Left cardiac atrium (tissue), 4 donors: ENCODE measurements at regions of chr12 and their contacts with region 1.

Region 1: DNA sequence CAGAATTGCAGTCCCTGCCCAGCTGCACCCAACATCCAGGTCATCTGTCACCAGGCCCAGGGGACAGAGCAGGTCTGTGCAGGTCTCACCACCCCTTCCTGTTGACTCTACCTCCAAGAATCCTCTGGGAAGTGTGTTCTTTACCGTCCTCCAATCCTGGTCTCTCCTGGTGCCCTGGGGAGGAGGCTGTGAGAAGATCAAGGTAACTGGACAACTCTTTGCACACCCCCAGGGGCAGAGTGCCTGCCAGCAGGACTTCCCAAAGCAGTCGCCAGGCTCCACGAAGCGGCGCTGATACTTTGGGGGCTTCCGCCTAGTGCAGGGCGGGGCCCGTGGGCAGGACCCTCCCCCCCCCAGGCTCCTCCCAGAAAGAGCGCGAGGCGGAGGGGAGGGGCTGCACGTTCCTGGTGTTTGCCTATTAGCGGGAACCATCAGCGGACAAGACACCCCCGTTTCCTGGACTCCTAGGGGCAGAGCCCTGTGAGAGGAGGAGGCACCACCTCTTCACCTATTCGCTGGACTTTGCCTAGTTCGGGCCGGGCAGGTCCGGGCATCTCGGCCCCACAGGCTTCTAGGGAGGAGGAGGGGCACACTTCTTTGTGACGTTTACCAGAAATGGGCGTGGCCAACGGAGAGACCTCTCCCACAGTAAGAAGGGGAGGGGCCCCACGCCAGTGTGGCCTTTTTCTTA is 918.0 kb downstream of the AACS start:
- DNase-seq: peak; percentile 61
- ATAC-seq: peak; percentile 83 to 95

Region 2: GRCh38 chr12:125766091-125766490 is 217.1 kb before region 1 on chr12:
- intact Hi-C with region 1: loop called in 1 of 2 experiments (anchors 10 kb)
- DNase-seq: no peak
- ATAC-seq: no peak

Region 3: DNA sequence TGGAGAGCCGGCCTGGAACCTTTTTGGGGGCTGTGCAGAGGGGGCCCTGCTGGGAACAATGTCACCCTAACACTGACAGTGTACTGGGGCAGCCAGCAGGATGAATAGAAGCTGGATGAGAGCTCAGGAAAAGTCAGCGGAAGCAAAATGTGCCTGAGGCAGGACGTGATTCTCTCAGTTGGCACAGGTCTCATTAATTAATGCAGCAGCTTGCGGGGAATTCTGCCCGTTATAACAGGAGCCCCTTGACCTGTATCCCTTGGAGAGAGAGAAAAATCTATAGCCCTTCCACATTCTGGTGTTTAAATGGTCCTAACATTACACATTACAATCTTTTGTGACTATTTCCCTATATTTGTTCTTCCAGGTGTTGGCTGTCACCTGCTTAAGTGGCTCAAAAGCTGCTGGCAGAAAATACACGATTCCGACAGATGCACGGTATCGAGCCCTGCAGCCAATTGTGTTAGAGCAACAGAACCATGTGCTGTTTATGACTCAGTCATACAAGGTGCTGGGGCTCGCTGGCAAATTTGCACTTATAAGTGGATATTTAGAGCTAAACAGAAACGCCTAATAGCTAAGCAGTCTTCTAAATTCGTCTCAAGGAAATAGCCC is 63.3 kb before region 1 on chr12:
- intact Hi-C with region 1: no loop called
- DNase-seq: no peak
- ATAC-seq: no peak

Region 4: DNA sequence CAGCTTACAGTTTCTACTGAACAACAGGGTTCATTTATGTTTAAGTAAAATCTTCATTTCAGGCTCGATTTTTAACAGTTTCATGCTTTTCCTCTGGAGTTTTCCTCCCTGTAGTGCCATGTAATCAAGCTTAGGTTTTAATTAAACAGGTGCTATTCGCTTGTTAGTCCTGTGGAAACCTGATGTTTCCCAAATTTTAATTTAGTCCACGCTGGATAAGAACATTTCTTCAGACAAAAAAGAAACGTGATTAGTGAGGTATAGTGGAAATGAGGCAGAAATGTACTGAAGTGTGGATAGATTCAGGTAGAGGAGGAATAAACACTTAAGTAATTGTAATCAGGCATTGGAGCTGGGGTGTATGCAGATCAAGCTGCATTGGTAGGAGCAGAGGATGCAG is 299.5 kb after region 1 on chr12:
- intact Hi-C with region 1: no loop called
- DNase-seq: no peak
- ATAC-seq: no peak